Mammary epithelial cell (primary cell): ENCODE measurements at regions of chr4 and their contacts with region 1.

Region 1: DNA sequence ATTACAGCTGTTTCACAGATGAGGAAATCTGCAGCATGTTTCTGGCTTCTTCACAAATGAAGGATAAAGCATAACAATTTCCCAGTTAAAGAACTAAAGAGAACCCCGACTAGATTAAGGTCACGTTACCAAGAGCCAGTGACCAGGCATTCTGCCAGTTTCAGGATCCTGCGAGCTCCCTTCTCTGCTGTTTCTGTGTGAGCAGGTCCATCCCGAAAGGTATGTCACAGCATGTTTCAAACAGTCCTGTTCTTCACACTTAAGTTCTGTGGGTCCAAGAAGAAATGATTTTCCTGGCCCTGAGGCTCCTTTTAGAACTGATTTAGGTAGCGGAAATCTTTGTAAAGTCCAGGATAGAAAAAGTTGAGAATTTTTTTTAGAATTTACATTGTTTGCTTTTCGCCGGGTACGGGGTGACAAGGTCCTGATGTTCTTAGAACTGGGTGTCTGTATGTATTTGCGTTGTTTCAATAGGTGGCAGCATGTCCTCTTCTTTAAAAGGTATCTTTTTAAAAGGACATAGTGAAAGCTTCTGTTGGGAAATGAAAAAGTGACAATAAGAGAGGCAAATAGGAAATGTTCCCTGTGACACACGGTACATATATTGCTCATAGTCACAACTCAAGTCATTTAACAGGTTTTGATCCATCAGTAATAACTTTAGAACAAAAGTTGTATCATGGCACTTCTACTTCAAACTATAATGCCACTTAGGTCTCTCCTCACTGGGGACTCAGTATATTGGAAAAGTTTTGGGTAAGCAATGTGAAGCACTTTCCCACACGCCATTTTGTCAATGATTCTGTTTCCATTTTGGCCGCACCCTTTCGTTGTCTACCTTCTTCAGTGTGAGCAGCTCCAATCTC is 18.4 kb downstream of the IL21 start:
- DNase-seq: peak; percentile 40
- H3K4me3 ChIP-seq: peak overlapping the region; percentile 10 to 21 (median 17)
- H3K27ac ChIP-seq: no peak overlapping the region
- H3K4me1 ChIP-seq: peaks cover 10% of the 10 kb centered on the region
- H3K27me3 ChIP-seq: peaks cover 2% of the 10 kb centered on the region
- CTCF ChIP-seq: peak; percentile 42 to 61

Region 2: DNA sequence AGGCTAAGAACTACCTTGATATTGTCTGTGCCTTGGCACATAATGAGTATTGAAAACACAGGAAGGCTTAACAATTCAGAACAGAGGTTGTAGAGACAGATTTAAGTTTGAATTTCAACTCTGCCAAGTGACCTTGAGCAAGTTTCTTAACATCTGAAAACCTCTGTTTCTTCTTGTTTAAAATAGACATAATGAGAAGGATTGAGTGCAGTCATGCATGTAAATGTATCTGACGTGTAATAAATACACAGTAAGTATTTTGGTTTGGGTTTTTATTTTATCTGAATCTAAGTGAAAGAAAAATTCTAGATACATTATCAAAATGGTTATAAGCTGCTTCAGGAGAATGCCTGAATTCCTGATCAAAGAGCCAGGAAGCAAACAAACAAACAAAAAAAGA is 1017.7 kb before region 1 on chr4:
- CTCF ChIA-PET with region 1: no interaction called
- dilution Hi-C with region 1: no loop called
- in situ Hi-C with region 1: no loop called
- intact Hi-C with region 1: no loop called
- DNase-seq: no peak
- H3K4me3 ChIP-seq: no peak overlapping the region
- H3K27ac ChIP-seq: no peak overlapping the region
- H3K4me1 ChIP-seq: no peaks in the 10 kb centered on the region
- H3K27me3 ChIP-seq: peaks cover 5% of the 10 kb centered on the region
- CTCF ChIP-seq: no peak

Region 3: DNA sequence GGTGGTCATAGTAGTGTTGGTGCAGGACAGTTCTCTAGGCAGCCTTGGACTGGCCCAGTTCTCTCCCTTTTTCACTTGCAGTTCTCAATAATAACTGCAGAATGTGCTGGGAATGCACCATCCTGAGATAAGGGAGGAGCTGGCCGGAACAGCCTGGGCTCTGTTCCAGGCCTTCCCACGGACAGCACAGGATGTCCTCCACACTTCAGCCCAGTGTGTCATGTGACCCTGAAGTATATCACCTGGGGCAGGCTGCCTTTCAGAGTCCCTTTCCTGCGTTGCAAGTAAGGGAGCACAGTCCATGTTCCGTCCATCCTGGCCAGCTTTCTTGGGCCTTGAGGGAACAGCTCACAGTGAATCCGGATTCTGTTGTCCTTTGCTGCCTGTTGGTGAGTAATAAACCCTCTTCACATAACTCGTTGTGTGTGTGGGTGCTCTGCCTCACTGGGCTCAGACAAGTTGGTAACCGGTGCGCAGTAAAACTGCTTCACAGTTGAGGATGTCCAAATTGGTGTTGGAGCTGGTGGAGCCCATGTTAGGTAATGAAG is 97.7 kb after region 1 on chr4:
- CTCF ChIA-PET with region 1: no interaction called
- dilution Hi-C with region 1: loop called (anchors 25 kb)
- in situ Hi-C with region 1: loop called (anchors 10 kb)
- intact Hi-C with region 1: no loop called
- DNase-seq: peak; percentile 92
- H3K4me3 ChIP-seq: peak overlapping the region; percentile 56 to 76 (median 63)
- H3K27ac ChIP-seq: peak overlapping the region; percentile 51
- H3K4me1 ChIP-seq: peaks cover 38% of the 10 kb centered on the region
- H3K27me3 ChIP-seq: no peaks in the 10 kb centered on the region
- CTCF ChIP-seq: no peak

Region 4: DNA sequence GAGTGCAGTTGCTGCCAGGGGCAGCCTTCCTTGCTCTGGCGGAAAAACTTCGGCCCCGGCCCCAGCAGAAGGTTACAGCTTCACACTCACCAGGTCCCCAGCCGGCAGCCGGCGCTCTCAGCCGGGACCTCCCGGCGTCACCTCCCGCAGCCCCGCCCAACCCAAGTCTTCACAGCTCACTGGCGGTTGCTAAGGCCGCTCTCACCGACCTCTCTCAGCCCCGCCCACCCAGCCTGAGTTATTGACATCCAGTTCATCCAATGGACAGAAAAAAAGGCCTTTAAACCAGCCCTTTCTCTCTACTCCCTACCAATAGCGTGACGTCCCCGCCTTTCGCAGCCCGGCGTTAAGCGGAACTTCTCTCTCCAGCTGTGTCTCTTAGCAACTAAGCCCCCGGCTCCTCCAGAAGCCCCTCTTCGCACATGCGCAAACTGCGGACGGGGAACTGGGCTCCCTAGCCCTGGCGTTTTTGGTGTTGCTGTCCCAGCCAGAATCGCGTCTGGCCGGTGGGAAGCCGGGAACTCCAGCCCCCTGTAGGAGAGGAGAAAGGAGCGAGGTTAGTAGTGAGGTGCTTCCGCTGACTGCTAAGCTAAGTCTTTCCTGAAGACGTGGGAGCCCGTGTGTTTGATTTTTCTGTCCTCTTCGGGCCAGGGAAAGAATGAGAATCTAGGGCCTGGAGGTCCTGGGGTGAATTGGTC is 130.0 kb after region 1 on chr4 and contains the start of gene BBS12:
- CTCF ChIA-PET with region 1: no interaction called
- dilution Hi-C with region 1: no loop called
- in situ Hi-C with region 1: no loop called
- intact Hi-C with region 1: loop called (anchors 5 kb)
- DNase-seq: peak; percentile 99
- H3K4me3 ChIP-seq: peak within 1 kb of the TSS; percentile 58 to 76 (median 70)
- H3K27ac ChIP-seq: peak within 1 kb of the TSS; percentile 92
- H3K4me1 ChIP-seq: peaks cover 7% of the 10 kb centered on the region
- H3K27me3 ChIP-seq: no peaks in the 10 kb centered on the region
- CTCF ChIP-seq: peak in 1 of 2 donors; percentile 62
- total RNA-seq, gene BBS12: 4.3 to 13.0 TPM

Region 5: GRCh38 chr4:122930862-122931261 is 328.4 kb after region 1 on chr4:
- CTCF ChIA-PET with region 1: no interaction called
- dilution Hi-C with region 1: no loop called
- in situ Hi-C with region 1: loop called in 1 of 2 experiments (anchors 10 kb)
- intact Hi-C with region 1: loop called (anchors 2 kb)
- DNase-seq: no peak
- H3K4me3 ChIP-seq: no peak overlapping the region
- H3K27ac ChIP-seq: no peak overlapping the region
- H3K4me1 ChIP-seq: no peaks in the 10 kb centered on the region
- H3K27me3 ChIP-seq: no peaks in the 10 kb centered on the region
- CTCF ChIP-seq: peak; percentile 43 to 49